Left ventricle myocardium superior (tissue), 1 donor: ENCODE measurements at regions of chr10 and their contacts with region 1.

Region 1: DNA sequence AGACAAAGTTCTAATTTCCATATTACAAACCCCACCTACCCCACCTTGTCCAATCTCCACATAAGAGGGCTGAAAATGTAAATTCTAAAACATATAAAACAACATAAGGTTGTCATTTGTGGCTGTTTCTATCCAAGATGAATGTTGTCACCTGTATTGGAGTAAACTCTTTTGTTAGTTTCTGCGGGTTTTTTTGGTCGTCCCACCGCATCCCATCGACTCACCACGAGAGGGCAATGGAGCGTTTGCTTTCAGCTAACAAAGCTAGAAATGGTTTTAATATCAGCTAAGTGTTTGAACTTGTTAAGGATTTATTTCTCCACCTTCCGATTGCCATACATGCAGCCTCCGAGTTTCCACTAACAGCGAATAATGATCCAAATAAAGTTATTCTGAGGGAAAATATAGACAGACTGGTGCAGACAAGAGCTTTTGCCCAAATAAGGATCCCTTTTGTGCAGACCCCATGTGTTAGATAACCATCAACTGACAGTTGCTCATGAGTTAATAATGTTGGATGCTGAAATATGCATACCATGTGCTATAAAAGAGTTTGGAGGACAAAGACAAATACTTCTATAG is 137.2 kb downstream of the ARID5B start:
- DNase-seq: peak; percentile 69
- ATAC-seq: peak; percentile 70

Region 2: DNA sequence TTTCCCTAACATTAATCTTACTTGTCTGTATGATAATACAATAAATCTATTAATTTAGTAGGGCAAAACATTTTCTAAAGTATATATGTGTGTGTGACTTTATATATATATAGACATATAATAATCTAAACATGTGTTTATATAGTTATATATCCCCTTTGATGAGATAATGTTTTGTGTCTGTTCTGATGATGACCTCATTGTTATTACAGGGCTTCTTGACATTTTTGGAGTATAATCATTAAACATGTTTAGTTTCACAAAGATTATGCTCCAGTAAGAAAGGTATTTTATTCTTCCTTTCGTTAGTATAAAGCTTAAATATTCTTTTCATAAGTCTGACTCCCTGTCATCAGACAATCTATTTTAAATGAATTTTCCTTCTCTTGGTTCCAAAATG is 438.3 kb before region 1 on chr10:
- intact Hi-C with region 1: no loop called
- DNase-seq: no peak
- ATAC-seq: no peak

Region 3: GRCh38 chr10:61903221-61903927 is 135.3 kb before region 1 on chr10:
- intact Hi-C with region 1: loop called (anchors 5 kb)
- DNase-seq: peak; percentile 74
- ATAC-seq: peak; percentile 82

Region 4: GRCh38 chr10:62082729-62083411 is 44.2 kb after region 1 on chr10:
- intact Hi-C with region 1: no loop called
- DNase-seq: no peak
- ATAC-seq: peak; percentile 56

Region 5: GRCh38 chr10:62244780-62245467 is 206.2 kb after region 1 on chr10:
- intact Hi-C with region 1: loop called (anchors 2 kb)
- DNase-seq: no peak
- ATAC-seq: peak; percentile 81